ENCODE measurements at regions of chr4 and their contacts with region 1.

Region 1: GRCh38 chr4:24584175-24584850 is at the start of gene DHX15:
- DNase-seq: peak; percentile 90
- H3K4me3 Mint-ChIP-seq: peak within 1 kb of the TSS; percentile 100
- H3K27ac Mint-ChIP-seq: peak within 1 kb of the TSS; percentile 100
- H3K4me1 Mint-ChIP-seq: peaks cover 25% of the 10 kb centered on the region
- H3K27me3 Mint-ChIP-seq: peaks cover 2% of the 10 kb centered on the region
- total RNA-seq, gene DHX15: 246 and 260 TPM in 2 replicates

Region 2: DNA sequence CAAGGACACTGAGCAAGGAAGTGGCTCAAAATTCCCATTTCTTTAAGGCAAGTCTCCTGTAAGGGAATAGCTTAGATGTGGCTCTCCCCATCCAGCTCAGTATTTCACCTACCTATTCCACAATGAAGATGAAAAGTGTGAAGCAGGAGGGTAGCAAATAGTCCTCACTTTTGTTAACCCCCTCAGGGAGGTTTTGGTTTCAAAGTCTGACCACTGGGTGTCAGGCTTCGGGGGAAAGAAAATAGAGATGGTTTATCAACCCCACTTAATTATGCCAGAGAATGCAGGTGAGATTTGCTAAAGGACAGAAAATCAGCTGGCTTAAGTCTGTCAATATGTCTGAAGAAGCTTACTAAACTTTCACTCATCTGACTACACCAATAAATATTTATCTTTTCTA is 69.5 kb before region 1 on chr4:
- intact Hi-C with region 1: loop called (anchors 5 kb)
- DNase-seq: no peak
- H3K4me3 Mint-ChIP-seq: no peak overlapping the region
- H3K27ac Mint-ChIP-seq: no peak overlapping the region
- H3K4me1 Mint-ChIP-seq: peaks cover 7% of the 10 kb centered on the region
- H3K27me3 Mint-ChIP-seq: no peaks in the 10 kb centered on the region

Region 3: GRCh38 chr4:24551492-24552289 is 32.6 kb before region 1 on chr4:
- intact Hi-C with region 1: loop called (anchors 2 kb)
- DNase-seq: no peak
- H3K4me3 Mint-ChIP-seq: no peak overlapping the region
- H3K27ac Mint-ChIP-seq: no peak overlapping the region
- H3K4me1 Mint-ChIP-seq: peaks cover 48% of the 10 kb centered on the region
- H3K27me3 Mint-ChIP-seq: no peaks in the 10 kb centered on the region

Region 4: DNA sequence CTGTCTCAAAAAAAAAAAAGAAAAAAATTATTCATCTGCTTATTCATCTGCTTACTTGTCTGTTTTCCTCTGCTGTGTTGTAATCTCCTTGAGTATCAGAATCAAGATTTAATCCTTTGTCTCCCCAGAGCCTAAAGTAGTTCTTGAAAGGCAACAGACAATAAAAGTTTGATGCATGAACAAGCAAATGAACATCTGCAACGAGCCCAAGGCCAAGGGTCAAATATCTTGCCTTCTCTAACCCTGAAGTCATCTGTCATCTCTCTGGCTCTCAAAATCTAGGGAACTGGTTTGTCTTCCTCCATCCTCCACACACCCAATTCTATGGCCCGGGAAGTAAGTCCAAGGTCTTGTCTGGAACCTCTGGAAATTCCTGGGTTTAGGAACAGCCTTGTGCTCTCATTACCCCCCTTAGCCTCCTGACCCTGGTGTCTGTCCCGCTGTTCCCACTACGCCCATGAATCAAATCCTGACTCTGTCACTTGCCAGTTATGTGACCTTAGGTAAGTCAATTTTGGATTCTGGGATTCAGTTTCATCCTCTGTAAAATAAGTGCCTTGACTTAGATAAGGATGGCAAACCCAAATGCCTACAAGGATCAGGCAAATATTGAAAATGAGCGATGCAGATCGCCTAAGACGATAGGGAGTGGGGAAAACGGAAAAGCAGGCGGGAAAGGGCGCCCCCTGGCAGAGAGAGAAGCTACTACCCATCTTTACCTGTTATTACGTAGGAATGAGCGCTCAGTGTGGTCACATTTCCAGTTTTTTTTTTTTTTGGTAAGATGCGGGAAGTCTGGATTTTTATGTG is 102.8 kb after region 1 on chr4:
- intact Hi-C with region 1: loop called (anchors 5 kb)
- DNase-seq: no peak
- H3K4me3 Mint-ChIP-seq: no peak overlapping the region
- H3K27ac Mint-ChIP-seq: no peak overlapping the region
- H3K4me1 Mint-ChIP-seq: no peaks in the 10 kb centered on the region
- H3K27me3 Mint-ChIP-seq: peaks cover 5% of the 10 kb centered on the region

Region 5: DNA sequence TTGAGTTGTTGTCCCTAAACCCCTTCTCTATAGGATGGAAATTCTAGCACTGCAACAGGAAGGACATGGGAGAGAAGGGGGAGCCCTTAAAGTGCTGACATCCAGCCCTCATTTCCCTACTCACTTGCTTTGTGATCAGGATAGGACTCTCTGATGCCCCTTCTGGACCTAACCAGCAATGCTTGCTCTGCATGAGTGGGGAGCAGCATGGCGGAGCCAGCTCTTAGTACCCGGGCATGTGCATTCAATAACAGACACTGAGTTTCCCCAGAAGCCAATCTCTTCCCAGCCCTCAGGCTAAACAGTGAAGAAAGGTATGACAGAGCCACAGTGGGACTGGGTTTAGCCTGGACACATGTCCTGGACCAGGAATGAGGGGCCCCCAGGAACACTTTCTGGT is 225.1 kb after region 1 on chr4:
- intact Hi-C with region 1: no loop called
- DNase-seq: no peak
- H3K4me3 Mint-ChIP-seq: no peak overlapping the region
- H3K27ac Mint-ChIP-seq: no peak overlapping the region
- H3K4me1 Mint-ChIP-seq: no peaks in the 10 kb centered on the region
- H3K27me3 Mint-ChIP-seq: no peaks in the 10 kb centered on the region

Region 6: GRCh38 chr4:25234390-25235370 is 650.4 kb after region 1 on chr4:
- intact Hi-C with region 1: loop called (anchors 1 kb)
- DNase-seq: peak; percentile 38
- H3K4me3 Mint-ChIP-seq: peak overlapping the region; percentile 92
- H3K27ac Mint-ChIP-seq: peak overlapping the region; percentile 98
- H3K4me1 Mint-ChIP-seq: peaks cover 37% of the 10 kb centered on the region
- H3K27me3 Mint-ChIP-seq: no peaks in the 10 kb centered on the region

Region 7: GRCh38 chr4:25913851-25914669 is 1329.7 kb after region 1 on chr4 and contains the start of gene SMIM20:
- intact Hi-C with region 1: loop called (anchors 10 kb)
- DNase-seq: peak; percentile 88
- H3K4me3 Mint-ChIP-seq: peak within 1 kb of the TSS; percentile 94
- H3K27ac Mint-ChIP-seq: peak within 1 kb of the TSS; percentile 99
- H3K4me1 Mint-ChIP-seq: peaks cover 24% of the 10 kb centered on the region
- H3K27me3 Mint-ChIP-seq: peaks cover 5% of the 10 kb centered on the region
- total RNA-seq, gene SMIM20: 19.2 and 21.5 TPM in 2 replicates

Measured in activated T-helper 1 cell treated with anti-CD3 and anti-CD28 coated beads, Interleukin-12 subunit alpha, Interleukin-12 subunit beta, Interleukin-2, Interleukin-4 antibody, amounts not matched to agents 30 ng/mL and 10 ng/mL and 1 ng/mL, durations not matched to agents 14 hours and 24 hours and 36 hours (primary cell).